ENCODE measurements at regions of chr5 and their contacts with region 1.

Region 1: DNA sequence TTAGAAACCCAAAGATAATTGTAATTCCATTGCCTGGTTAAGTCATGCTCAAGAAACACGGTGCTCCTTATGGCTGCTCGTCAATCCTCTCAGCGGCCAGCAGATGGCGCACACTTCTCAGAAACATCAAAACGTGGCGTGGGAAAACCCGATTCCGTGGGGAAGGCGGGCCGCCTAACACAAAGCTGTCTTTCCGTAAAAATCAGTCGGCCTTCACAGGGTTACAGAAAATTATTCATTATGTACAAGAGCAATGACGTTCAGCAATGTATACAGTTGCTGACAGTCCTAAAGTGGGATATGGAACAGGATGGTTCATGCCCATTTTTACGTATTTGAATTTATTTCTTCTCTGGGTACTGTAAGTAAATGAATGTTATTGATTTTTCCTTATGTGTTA is 83.5 kb downstream of the PDE4D start:
- DNase-seq: peak; percentile 85

Region 2: GRCh38 chr5:59999056-59999455 is 189.0 kb after region 1 on chr5:
- intact Hi-C with region 1: no loop called
- DNase-seq: no peak

Region 3: DNA sequence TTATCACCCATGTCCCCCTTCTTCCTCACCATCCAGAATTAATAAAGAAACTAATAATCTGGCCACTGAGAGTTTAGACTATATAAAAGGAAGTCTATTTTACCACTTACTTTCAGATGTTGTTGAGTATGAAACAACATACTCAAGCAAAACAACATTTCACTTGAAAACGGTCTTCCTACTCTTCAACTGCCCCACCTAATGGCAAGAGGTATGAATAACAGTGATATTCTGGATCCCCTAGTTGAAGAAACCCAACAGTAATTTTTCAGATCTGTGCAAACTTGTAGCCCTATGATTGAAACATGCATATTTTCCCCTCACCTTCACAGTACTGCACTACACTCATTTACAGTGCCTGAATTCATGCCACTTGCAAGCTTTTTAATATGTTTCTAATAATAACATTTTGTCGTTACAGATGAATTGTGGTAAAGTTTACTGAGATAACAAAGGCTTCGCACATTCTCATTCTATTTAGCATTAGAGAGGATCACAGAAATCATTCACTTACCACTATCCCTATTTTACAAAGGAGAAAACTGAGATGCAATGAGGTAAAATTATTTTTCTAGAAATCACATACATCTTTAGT is 351.4 kb after region 1 on chr5:
- intact Hi-C with region 1: loop called (anchors 5 kb)
- DNase-seq: no peak

Region 4: DNA sequence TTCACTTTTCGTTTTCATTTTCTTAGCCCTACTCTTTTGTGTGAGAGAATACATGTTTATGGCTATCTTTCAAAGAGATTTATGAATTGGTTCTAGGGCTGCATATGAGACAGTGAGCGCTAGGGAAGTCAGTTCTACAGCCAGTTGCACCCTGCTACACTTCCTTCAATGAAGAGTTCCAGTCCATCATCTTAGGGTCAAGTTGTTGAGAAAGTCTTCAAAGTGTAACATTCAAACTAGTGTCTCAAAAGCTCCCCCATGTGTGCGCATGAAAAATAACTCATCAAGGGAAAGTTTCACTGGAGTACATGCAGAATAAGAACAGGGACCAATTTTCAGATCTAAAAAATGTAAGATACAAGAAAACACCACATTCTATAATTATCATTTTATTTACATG is 572.7 kb after region 1 on chr5:
- intact Hi-C with region 1: loop called (anchors 10 kb)
- DNase-seq: no peak

Region 5: DNA sequence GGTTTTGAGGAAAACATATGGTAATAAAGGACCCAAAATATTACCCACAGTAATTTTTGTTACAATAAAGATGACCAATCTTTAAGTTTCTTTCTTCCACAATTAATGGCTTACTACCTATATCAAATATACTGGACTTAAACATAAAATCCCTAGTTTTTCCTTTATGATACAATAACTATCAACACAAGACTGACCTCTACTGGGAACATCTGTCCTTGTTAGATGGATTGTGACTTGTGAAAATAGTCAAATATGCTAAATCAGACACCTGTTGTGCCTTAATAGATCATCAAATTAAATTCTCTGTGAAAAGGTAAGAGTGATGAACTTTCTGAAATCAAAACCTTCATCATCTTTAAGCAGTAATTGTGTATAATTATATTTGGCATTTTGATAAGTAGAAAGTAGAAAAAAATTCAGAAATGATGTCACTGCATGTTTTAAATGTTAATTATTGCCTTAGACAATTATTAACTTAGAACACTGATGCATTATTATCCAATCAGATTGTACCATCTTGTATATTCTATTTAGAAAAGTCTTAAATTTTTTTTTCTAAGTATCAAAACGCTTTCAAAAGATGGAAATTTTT is 776.4 kb after region 1 on chr5:
- intact Hi-C with region 1: loop called (anchors 2 kb)
- DNase-seq: no peak

Region 6: DNA sequence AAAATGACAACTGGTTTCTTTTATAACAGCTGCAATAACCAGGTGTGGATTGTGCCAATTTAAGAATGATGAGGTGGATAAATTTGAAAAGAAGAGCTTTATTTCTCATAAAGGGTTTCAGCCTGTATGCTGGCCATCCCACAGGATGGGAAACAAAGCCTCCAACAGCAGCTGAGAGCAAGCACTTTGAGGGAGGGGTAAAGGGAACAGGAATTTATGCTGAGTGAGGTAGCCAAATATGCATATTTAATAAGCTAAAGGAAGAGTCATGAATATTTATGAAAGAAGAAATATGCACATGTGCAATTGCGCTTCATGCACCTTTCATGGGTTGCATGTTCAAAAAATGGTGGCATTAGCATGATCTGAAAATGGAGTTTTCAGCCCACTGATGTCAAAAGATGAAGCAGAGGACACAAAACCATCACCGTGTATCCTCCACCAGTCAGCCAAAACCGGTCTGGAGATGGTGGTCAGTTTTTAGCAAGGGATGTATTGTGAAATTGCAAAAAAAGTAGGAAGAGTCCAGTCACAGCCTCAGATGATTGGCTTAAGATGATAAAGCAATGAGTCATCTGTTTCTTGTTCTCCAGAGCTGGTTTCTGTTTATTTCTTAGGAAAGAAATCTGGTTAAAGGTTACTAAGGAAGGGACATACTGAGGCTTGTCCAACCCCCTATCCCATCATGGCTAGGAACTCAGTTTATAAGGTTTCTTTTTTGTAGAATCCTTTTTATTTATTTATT is 842.0 kb after region 1 on chr5:
- intact Hi-C with region 1: loop called (anchors 5 kb)
- DNase-seq: no peak

Measured in cardiac septum (tissue), 1 donor.